Motor neuron (in vitro differentiated cells): ENCODE measurements at regions of chr16 and their contacts with region 1.

Region 1: GRCh38 chr16:1863681-1864460 is 8.1 kb downstream of the MEIOB start:
- ATAC-seq: peak in 1 of 8 experiments; percentile 26
- H3K4me3 ChIP-seq: no peak overlapping the region
- H3K27ac ChIP-seq: no peak overlapping the region
- H3K4me1 ChIP-seq: no peaks in the 10 kb centered on the region

Region 2: DNA sequence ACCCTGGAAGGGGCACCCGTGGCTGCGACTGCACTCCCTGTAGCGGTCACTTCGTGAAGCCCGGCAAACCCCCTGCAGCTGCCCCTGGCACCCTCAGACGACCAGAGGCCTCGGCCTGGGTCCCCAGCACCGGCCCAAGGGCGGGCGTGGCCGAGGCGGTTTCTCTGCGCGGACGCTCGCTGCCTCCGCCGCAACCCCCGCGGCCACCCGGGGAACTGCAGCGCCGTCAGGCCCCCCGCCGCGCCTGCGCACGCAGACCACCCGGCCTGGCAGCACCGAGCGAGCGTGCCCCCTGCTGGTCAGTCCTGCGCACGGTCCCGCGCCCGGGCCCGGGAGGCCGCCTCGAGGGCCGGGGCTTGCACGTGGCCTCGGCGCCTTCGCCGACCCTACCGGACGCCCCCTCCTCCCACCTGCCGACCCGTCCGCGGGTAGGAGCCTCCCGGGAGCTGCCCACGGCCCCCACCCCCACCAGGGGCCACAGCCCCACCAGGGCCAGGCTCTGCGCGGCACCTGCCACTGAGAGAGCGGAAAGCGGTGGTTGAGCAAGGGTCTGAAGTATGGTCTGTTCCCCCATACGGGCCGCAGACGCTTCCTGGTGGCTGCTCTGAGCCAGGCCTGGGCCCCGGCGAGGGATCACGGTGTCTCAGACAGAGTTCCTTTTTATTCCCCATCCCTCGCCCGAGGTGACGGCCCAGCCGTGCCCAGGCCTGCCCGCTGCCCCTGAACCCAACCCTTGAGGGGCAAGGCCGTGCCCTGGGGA is 65.9 kb after region 1 on chr16:
- in situ Hi-C with region 1: loop called in 2 of 9 experiments (anchors 5 to 10 kb)
- ATAC-seq: peak; percentile 84 to 95 (median 94)
- H3K4me3 ChIP-seq: peak overlapping the region; percentile 14 to 37 (median 26)
- H3K27ac ChIP-seq: peak overlapping the region in 1 of 2 donors; percentile 32
- H3K4me1 ChIP-seq: peaks cover 2 to 11% of the 10 kb centered on the region in 2 donors